WTC11 (cell line): ENCODE measurements at regions of chr22 and their contacts with region 1.

Region 1: GRCh38 chr22:33049119-33049729 is 9.0 kb downstream of the SYN3 start:
- DNase-seq: peak; percentile 83
- ATAC-seq: peak; percentile 43
- H3K4me3 Mint-ChIP-seq: no peak overlapping the region
- H3K27ac Mint-ChIP-seq: no peak overlapping the region
- H3K4me1 Mint-ChIP-seq: peaks cover 79% of the 10 kb centered on the region
- H3K27me3 Mint-ChIP-seq: peaks cover 30% of the 10 kb centered on the region
- CTCF ChIP-seq: peak; percentile 78

Region 2: DNA sequence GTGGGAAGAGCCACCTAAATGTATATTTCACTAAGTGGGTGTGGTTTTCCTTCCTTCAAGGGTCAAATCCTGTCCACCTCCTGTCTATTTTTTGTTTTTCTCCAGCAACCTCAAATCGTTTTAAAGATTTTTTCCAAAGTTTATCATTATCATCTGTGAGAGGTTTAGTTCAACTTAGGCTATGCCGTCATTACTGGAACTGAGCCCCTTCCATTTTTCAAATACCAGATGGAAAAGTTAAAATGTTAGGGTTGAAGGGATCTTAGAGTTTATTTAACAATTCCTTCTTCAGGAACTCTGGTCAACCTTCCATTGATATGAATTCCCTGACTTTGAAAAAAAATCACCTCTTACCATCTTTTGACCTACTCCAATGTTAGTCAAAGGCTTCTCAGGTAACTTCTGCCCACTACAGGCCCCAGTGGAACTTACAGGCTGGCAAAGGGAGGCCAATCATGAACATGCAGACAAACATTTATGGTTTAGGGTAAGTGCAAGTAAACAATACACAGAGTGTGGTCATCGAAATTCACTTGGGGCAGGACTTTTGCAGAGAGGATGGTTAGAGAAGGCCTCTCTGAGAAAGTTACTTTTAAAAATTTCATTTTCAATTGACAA is 36.3 kb before region 1 on chr22:
- CTCF ChIA-PET with region 1: interaction called, 82 read pairs
- POLR2A ChIA-PET with region 1: interaction called, 3 read pairs
- DNase-seq: no peak
- ATAC-seq: peak; percentile 64
- H3K4me3 Mint-ChIP-seq: no peak overlapping the region
- H3K27ac Mint-ChIP-seq: no peak overlapping the region
- H3K4me1 Mint-ChIP-seq: peaks cover 3% of the 10 kb centered on the region; the same call in 1 of the 2 replicates
- H3K27me3 Mint-ChIP-seq: no peaks in the 10 kb centered on the region
- CTCF ChIP-seq: no peak

Region 3: DNA sequence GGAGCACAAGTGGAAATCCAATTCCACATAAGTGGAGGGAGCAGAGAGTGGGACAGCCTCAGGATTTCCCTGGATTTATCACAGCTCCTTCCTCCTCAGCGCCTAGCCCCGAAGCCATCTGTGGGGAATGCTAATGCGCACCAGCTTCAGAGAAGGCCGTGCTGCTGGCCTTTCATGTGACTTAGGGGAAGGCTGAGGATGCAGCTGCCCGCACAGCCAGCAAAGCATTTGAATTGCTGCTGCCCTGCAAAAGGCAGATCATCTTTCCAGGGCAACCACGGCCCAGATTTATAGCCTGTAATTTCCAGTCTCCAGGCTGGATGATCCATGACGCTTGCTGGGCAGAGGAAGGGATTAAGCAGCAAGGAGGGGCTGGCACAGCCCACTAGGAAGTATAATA is 21.0 kb before region 1 on chr22:
- CTCF ChIA-PET with region 1: interaction called, 22 read pairs
- POLR2A ChIA-PET with region 1: no interaction called
- DNase-seq: no peak
- ATAC-seq: no peak
- H3K4me3 Mint-ChIP-seq: no peak overlapping the region
- H3K27ac Mint-ChIP-seq: no peak overlapping the region; the same call in 1 of the 2 replicates
- H3K4me1 Mint-ChIP-seq: peaks cover 19% of the 10 kb centered on the region
- H3K27me3 Mint-ChIP-seq: no peaks in the 10 kb centered on the region
- CTCF ChIP-seq: no peak

Region 4: DNA sequence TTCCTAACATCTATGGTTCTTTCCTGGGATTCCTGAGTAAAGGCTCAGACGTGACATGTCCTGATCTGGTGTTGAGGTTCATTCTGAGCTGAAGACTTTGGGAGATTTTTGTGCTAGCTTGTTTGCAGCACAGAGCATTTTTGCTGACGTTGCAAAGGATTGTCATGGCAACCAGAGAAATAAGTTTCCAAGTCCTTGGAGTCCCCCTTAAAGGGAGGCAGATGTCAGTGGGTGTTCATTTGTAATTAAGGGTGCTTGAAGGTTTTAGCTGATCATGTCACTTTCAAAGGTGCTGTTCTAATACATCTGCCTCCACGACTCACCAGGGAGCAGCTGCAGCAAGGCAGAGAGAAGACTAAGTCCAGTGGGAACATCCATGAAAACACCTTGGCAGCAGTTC is 14.4 kb after region 1 on chr22:
- CTCF ChIA-PET with region 1: interaction called, 74 read pairs
- POLR2A ChIA-PET with region 1: no interaction called
- DNase-seq: no peak
- ATAC-seq: no peak
- H3K4me3 Mint-ChIP-seq: no peak overlapping the region
- H3K27ac Mint-ChIP-seq: no peak overlapping the region
- H3K4me1 Mint-ChIP-seq: peaks cover 43% of the 10 kb centered on the region
- H3K27me3 Mint-ChIP-seq: peaks cover 52% of the 10 kb centered on the region
- CTCF ChIP-seq: no peak

Region 5: GRCh38 chr22:33202455-33202854 is 153.2 kb after region 1 on chr22:
- CTCF ChIA-PET with region 1: interaction called, 17 read pairs
- POLR2A ChIA-PET with region 1: no interaction called
- DNase-seq: no peak
- ATAC-seq: no peak
- H3K4me3 Mint-ChIP-seq: no peak overlapping the region
- H3K27ac Mint-ChIP-seq: no peak overlapping the region
- H3K4me1 Mint-ChIP-seq: no peaks in the 10 kb centered on the region
- H3K27me3 Mint-ChIP-seq: peaks cover 71% of the 10 kb centered on the region
- CTCF ChIP-seq: no peak